ENCODE measurements at regions of chr14 and their contacts with region 1.

Region 1: DNA sequence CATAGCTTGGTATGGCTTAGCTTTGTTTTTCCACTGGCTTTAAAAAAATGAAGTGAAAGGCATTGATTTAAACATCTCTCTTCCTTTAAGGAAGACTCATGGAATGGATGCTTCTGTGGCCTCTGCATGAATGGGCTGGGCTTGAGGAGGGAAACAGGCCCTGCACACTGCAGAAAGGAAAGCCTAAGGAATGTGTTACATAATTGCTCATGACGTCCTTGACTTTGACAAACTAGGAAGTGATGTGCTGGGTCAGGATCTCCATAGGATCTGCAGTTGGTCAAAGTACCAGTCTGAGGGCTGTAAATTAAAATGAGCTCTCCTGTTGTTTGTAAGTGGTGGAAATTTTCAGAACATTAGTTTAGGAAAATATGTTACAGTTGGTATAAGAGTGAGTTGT is 12.7 kb downstream of the SAMD4A start:
- DNase-seq: no peak
- ATAC-seq: peak; percentile 49 to 74 (median 60)
- H3K4me3 ChIP-seq: no peak overlapping the region
- H3K27ac ChIP-seq: peak overlapping the region; percentile 39
- H3K4me1 ChIP-seq: peaks cover 81% of the 10 kb centered on the region
- H3K27me3 ChIP-seq: no peaks in the 10 kb centered on the region
- CTCF ChIP-seq: no peak

Region 2: GRCh38 chr14:54606178-54606577 is 26.6 kb after region 1 on chr14:
- intact Hi-C with region 1: loop called (anchors 5 kb)
- DNase-seq: peak in 1 of 2 donors; percentile 59
- ATAC-seq: peak in 3 of 4 donors; percentile 29 to 45 (median 43)
- H3K4me3 ChIP-seq: no peak overlapping the region
- H3K27ac ChIP-seq: peak overlapping the region; percentile 73
- H3K4me1 ChIP-seq: peaks cover 36% of the 10 kb centered on the region
- H3K27me3 ChIP-seq: no peaks in the 10 kb centered on the region
- CTCF ChIP-seq: no peak

Region 3: GRCh38 chr14:54622192-54622958 is 42.8 kb after region 1 on chr14:
- intact Hi-C with region 1: loop called in 1 of 2 experiments (anchors 5 kb)
- DNase-seq: no peak
- ATAC-seq: no peak
- H3K4me3 ChIP-seq: no peak overlapping the region
- H3K27ac ChIP-seq: peak overlapping the region; percentile 1
- H3K4me1 ChIP-seq: peaks cover 43% of the 10 kb centered on the region
- H3K27me3 ChIP-seq: no peaks in the 10 kb centered on the region
- CTCF ChIP-seq: no peak